CD8-positive, alpha-beta memory T cell (primary cell): ENCODE measurements at regions of chrX and their contacts with region 1.

Region 1: GRCh38 chrX:100768679-100769338 is 36.9 kb upstream of the SYTL4 start:
- DNase-seq: peak; percentile 69 to 85 (median 73)
- H3K4me3 ChIP-seq: no peak overlapping the region
- H3K4me3 Mint-ChIP-seq: no peak overlapping the region
- H3K27ac ChIP-seq: no peak overlapping the region
- H3K27ac Mint-ChIP-seq: no peak overlapping the region
- H3K4me1 ChIP-seq: no peaks in the 10 kb centered on the region
- H3K4me1 Mint-ChIP-seq: no peaks in the 10 kb centered on the region
- H3K27me3 ChIP-seq: no peaks in the 10 kb centered on the region
- H3K27me3 Mint-ChIP-seq: peaks cover 4 to 5% of the 10 kb centered on the region in 2 donors

Region 2: DNA sequence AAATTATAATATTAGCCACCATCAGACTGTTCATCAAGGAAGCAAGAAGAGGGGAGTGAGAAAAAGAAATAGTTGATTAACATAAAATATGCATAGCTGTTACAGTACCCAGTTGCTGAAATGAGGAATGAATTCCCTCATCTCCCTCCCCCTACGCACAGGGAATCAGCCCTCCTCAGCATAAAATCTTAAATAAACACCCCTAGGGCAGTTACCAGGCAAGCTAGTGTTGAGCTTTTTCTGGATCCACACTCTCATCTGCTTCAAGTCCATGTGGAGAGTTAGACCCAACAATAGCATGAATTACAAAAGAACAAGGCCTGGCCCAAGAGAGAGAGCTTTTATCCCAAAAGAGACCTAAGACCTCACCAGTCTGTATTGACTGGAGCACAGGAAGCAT is 17.9 kb before region 1 on chrX:
- CTCF ChIA-PET with region 1: interaction called, 10 read pairs
- POLR2A ChIA-PET with region 1: no interaction called
- DNase-seq: no peak
- H3K4me3 ChIP-seq: no peak overlapping the region
- H3K4me3 Mint-ChIP-seq: no peak overlapping the region
- H3K27ac ChIP-seq: no peak overlapping the region
- H3K27ac Mint-ChIP-seq: no peak overlapping the region
- H3K4me1 ChIP-seq: no peaks in the 10 kb centered on the region
- H3K4me1 Mint-ChIP-seq: no peaks in the 10 kb centered on the region
- H3K27me3 ChIP-seq: no peaks in the 10 kb centered on the region
- H3K27me3 Mint-ChIP-seq: peaks cover 26 to 28% of the 10 kb centered on the region in 2 donors

Region 3: GRCh38 chrX:100798484-100799214 is 29.8 kb after region 1 on chrX:
- CTCF ChIA-PET with region 1: no interaction called
- POLR2A ChIA-PET with region 1: no interaction called
- DNase-seq: no peak
- H3K4me3 ChIP-seq: no peak overlapping the region
- H3K4me3 Mint-ChIP-seq: no peak overlapping the region
- H3K27ac ChIP-seq: no peak overlapping the region
- H3K27ac Mint-ChIP-seq: no peak overlapping the region
- H3K4me1 ChIP-seq: no peaks in the 10 kb centered on the region
- H3K4me1 Mint-ChIP-seq: no peaks in the 10 kb centered on the region
- H3K27me3 ChIP-seq: no peaks in the 10 kb centered on the region
- H3K27me3 Mint-ChIP-seq: peaks cover 4 to 7% of the 10 kb centered on the region in 2 donors